ENCODE measurements at regions of chr11 and their contacts with region 1.

Region 1: GRCh38 chr11:67353317-67354074 is at the start of gene POLD4:
- DNase-seq: peak; percentile 100
- ATAC-seq: peak; percentile 95
- total RNA-seq, gene POLD4: 49.7 TPM

Region 2: GRCh38 chr11:67382276-67383136 is 29.0 kb after region 1 on chr11:
- intact Hi-C with region 1: loop called (anchors 1 kb)
- DNase-seq: peak; percentile 88
- ATAC-seq: peak; percentile 82

Region 3: DNA sequence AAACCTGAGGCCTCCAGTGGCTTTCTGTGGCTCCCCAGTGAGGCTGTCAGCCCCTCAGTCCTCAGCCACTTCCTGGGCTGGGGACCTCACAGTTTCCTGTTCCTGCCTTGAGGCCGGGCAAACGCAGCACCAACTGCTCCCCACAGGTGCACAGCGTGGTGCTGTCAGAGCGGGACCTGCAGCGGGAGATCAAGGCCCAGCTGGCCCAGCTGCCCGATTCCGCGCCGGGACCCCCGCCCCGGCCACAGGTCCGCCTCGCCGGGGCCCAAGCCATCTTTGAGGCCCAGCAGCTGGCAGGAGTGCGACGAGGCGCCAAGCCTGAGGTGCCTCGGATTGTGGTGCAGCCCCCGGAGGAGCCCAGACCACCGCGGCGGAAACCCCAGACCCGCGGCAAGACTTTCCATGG is 55.8 kb after region 1 on chr11:
- intact Hi-C with region 1: no loop called
- DNase-seq: no peak
- ATAC-seq: no peak

Region 4: GRCh38 chr11:67572747-67573419 is 219.4 kb after region 1 on chr11:
- intact Hi-C with region 1: no loop called
- DNase-seq: no peak
- ATAC-seq: no peak

Region 5: DNA sequence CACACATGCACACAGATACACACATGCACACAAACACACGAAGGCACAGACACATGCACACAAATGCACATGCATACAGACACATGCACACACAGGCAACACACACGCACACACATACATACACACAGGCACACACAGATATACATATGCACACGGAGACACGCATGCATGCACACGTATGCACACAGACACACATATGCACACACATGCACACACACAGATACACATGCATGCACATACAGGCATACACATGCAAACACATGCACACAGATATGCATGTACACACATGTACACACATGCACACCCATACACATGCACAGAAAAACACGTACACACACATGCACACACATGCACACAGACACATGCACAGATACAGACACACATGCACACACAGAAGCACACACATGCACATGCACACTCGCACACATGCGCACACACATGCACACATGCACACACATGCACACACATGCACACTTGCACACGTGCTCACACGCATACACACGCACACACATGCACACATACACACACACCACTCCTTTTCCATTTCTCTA is 391.8 kb after region 1 on chr11:
- intact Hi-C with region 1: no loop called
- DNase-seq: no peak
- ATAC-seq: no peak